CD14-positive monocyte (primary cell): ENCODE measurements at regions of chr2 and their contacts with region 1.

Region 1: DNA sequence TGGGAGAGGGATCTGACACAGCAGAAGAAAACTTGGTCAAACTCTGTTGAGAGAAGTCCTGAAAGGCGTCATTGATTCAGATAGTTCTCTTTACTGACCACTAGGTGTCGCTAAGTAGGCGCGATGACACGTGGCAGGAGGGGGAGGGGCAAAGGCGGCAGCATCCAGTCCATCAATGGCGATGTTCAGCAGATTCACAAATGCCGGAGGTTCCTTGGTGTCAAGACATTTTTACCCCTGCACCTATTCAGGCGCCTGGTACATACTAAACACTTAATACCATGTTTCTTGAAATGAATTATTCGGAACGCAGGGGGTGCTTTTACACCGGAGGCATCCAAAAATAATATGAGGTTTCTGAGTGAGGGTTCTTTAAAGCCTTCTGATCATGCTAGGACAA is 3.0 kb upstream of the PLEK start:
- DNase-seq: peak; percentile 77 to 84 (median 82)
- H3K4me3 ChIP-seq: peak overlapping the region; percentile 28 to 71 (median 44)
- H3K4me3 Mint-ChIP-seq: peak overlapping the region; percentile 66 to 72
- H3K27ac ChIP-seq: peak overlapping the region; percentile 14 to 96
- H3K27ac Mint-ChIP-seq: peak overlapping the region; percentile 92 to 98 (median 96)
- H3K4me1 ChIP-seq: peaks cover 29 to 37% of the 10 kb centered on the region in 2 donors
- H3K4me1 Mint-ChIP-seq: peaks cover 39% of the 10 kb centered on the region
- H3K27me3 ChIP-seq: no peaks in the 10 kb centered on the region
- H3K27me3 Mint-ChIP-seq: no peaks in the 10 kb centered on the region
- CTCF ChIP-seq: peak; percentile 82

Region 2: DNA sequence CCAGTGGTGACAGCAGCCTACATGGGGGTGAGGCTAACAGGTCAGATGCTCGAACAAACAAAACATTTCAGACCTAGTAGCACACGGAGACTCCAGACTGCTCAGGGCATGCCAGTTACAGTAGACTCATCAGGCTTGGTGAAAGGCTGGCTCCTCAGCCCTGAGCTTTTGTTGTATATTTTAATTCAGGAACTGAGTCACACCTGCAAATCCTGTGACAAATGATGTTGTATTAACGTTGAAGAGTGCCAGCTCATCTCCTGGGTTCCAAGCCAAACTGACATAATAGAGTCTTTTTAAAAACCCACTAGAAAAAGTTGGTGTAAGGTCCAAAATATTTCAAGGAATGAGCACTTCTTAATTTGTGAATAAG is 364.6 kb before region 1 on chr2:
- intact Hi-C with region 1: no loop called
- DNase-seq: no peak
- H3K4me3 ChIP-seq: no peak overlapping the region
- H3K4me3 Mint-ChIP-seq: no peak overlapping the region
- H3K27ac ChIP-seq: no peak overlapping the region
- H3K27ac Mint-ChIP-seq: no peak overlapping the region
- H3K4me1 ChIP-seq: no peaks in the 10 kb centered on the region
- H3K4me1 Mint-ChIP-seq: no peaks in the 10 kb centered on the region
- H3K27me3 ChIP-seq: no peaks in the 10 kb centered on the region
- H3K27me3 Mint-ChIP-seq: peaks cover 2 to 11% (median 8%) of the 10 kb centered on the region in 3 donors
- CTCF ChIP-seq: no peak

Region 3: DNA sequence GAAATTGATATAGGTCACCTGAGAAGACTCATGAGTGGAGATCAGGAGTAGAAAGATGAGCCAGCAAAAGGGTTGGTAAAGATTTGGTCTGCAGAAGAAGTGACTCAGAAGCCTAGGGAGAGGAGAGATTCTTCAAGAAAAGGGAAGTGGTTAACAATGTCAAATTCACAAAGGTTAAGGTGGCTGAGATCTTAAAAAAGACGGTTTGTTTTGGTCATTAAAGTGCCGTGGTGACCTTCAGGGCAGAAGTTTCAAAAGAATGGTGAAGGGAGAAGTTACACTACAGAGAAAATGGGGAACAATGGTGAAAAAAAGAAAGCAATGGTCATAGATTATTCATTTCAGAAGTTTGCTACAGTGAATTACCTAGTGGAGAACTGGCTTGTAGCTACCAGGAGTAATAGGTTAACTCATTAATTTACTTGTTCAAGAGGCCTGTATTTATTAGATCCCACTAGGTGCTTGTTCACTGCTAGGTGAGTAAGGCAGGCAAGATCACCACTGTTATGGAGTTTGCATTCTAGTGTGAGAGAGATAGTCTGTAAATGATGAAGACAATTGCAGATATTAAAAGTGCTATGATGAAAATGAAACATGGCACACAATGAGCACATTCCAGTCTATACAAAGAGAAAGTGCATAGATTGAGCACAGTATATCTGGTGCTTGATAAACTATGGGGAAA is 62.0 kb after region 1 on chr2:
- intact Hi-C with region 1: loop called in 1 of 2 experiments (anchors 5 kb)
- DNase-seq: peak; percentile 91 to 95 (median 94)
- H3K4me3 ChIP-seq: peak overlapping the region in 1 of 3 experiments; percentile 45
- H3K4me3 Mint-ChIP-seq: no peak overlapping the region
- H3K27ac ChIP-seq: peak overlapping the region; percentile 12 to 91
- H3K27ac Mint-ChIP-seq: no peak overlapping the region
- H3K4me1 ChIP-seq: peaks cover 75 to 79% of the 10 kb centered on the region in 2 donors
- H3K4me1 Mint-ChIP-seq: peaks cover 40% of the 10 kb centered on the region
- H3K27me3 ChIP-seq: no peaks in the 10 kb centered on the region
- H3K27me3 Mint-ChIP-seq: no peaks in the 10 kb centered on the region
- CTCF ChIP-seq: no peak

Region 4: GRCh38 chr2:68441179-68441993 is 79.3 kb after region 1 on chr2:
- intact Hi-C with region 1: loop called (anchors 1 to 5 kb)
- DNase-seq: peak; percentile 93 to 99 (median 97)
- H3K4me3 ChIP-seq: peak overlapping the region in 1 of 3 experiments; percentile 28
- H3K4me3 Mint-ChIP-seq: peak overlapping the region in 1 of 2 donors; percentile 26
- H3K27ac ChIP-seq: peak overlapping the region; percentile 39 to 69
- H3K27ac Mint-ChIP-seq: peak overlapping the region; percentile 85 to 95 (median 93)
- H3K4me1 ChIP-seq: peaks cover 25 to 26% of the 10 kb centered on the region in 2 donors
- H3K4me1 Mint-ChIP-seq: peaks cover 30% of the 10 kb centered on the region
- H3K27me3 ChIP-seq: no peaks in the 10 kb centered on the region
- H3K27me3 Mint-ChIP-seq: no peaks in the 10 kb centered on the region
- CTCF ChIP-seq: peak; percentile 90